ENCODE measurements at regions of chr10 and their contacts with region 1.

Region 1: GRCh38 chr10:9707216-9707615 is 1310.5 kb upstream of the CELF2 start:
- DNase-seq: peak; percentile 55
- H3K4me3 ChIP-seq: peak overlapping the region; percentile 62
- H3K27ac ChIP-seq: peak overlapping the region; percentile 77
- H3K4me1 ChIP-seq: peaks cover 23% of the 10 kb centered on the region
- CTCF ChIP-seq: no peak

Region 2: DNA sequence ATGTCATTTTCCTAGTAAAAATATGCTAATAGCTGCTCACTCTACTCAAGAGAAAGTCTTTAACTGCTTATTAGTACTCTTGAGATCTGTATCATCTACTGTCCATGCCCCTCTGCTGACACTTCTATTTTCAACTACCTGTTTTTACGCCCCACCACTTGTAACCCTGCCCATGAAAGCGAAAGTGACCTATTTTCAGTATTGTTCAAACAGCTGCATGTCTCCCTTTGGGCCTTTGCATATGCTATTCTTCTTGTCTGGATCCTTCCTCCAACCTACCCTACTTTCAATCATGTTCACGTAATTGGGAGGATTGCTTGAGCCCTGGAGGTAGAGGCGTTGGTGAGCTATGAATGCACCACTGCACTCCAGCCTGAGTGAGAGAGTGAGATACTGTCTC is 171.5 kb before region 1 on chr10:
- CTCF ChIA-PET with region 1: no interaction called
- POLR2A ChIA-PET with region 1: interaction called, 11 read pairs
- intact Hi-C with region 1: loop called (anchors 1 kb)
- DNase-seq: peak; percentile 89
- H3K4me3 ChIP-seq: peak overlapping the region; percentile 50
- H3K27ac ChIP-seq: peak overlapping the region; percentile 90
- H3K4me1 ChIP-seq: peaks cover 36% of the 10 kb centered on the region
- CTCF ChIP-seq: no peak